ENCODE measurements at regions of chr2 and their contacts with region 1.

Region 1: GRCh38 chr2:202700075-202700901 is 65.5 kb downstream of the FAM117B start:
- DNase-seq: no peak
- H3K4me3 Mint-ChIP-seq: no peak overlapping the region
- H3K27ac Mint-ChIP-seq: peak overlapping the region; percentile 45
- H3K4me1 Mint-ChIP-seq: peaks cover 39% of the 10 kb centered on the region
- H3K27me3 Mint-ChIP-seq: no peaks in the 10 kb centered on the region

Region 2: DNA sequence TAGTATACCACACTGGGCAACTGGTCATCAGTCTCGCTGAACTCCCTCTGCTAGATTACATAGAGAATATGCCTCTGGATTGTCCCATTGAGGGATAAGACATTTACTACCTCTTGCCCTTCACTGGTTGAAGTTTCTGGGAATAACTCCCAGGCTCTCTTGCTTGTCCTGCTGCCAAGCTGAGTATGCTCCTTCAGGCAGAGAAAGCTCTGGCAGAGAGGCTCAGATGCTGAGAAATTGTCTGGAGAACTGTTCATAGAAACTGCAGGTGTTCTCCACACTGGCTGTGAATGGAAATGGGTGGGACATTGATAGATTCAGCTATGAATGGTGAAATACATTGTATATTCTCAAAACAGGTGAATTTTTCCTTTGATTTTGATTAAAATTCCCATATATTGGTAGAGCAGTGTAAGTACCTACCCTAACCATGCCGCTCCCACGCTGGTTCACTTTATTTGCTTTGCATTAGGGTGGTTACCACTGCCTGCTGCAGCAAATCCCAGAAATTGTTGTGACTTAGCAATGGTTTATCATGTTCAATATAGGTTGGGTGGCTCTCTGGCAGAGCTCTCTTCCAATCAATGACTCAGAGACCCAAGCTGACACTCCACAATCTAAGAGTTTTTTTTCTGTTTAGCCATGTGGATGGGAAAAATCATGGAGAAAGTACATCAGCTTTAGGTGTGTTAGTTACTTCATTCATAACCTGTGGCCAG is 28.8 kb before region 1 on chr2:
- intact Hi-C with region 1: loop called (anchors 1 kb)
- DNase-seq: no peak
- H3K4me3 Mint-ChIP-seq: no peak overlapping the region
- H3K27ac Mint-ChIP-seq: no peak overlapping the region
- H3K4me1 Mint-ChIP-seq: peaks cover 34% of the 10 kb centered on the region
- H3K27me3 Mint-ChIP-seq: no peaks in the 10 kb centered on the region